Naive thymus-derived CD8-positive, alpha-beta T cell (primary cell): ENCODE measurements at regions of chr10 and their contacts with region 1.

Region 1: GRCh38 chr10:102229810-102230263 is 3.7 kb downstream of the ELOVL3 start:
- DNase-seq: peak; percentile 73 to 91 (median 86)
- ATAC-seq: peak; percentile 57 to 60
- H3K4me3 Mint-ChIP-seq: peak overlapping the region; percentile 74 to 91 (median 82)
- H3K27ac Mint-ChIP-seq: peak overlapping the region in 1 of 10 donors; percentile 7
- H3K4me1 Mint-ChIP-seq: peaks cover 18 to 42% (median 31%) of the 10 kb centered on the region in 4 donors
- H3K27me3 Mint-ChIP-seq: peaks cover 27 to 74% (median 45%) of the 10 kb centered on the region in 5 donors

Region 2: DNA sequence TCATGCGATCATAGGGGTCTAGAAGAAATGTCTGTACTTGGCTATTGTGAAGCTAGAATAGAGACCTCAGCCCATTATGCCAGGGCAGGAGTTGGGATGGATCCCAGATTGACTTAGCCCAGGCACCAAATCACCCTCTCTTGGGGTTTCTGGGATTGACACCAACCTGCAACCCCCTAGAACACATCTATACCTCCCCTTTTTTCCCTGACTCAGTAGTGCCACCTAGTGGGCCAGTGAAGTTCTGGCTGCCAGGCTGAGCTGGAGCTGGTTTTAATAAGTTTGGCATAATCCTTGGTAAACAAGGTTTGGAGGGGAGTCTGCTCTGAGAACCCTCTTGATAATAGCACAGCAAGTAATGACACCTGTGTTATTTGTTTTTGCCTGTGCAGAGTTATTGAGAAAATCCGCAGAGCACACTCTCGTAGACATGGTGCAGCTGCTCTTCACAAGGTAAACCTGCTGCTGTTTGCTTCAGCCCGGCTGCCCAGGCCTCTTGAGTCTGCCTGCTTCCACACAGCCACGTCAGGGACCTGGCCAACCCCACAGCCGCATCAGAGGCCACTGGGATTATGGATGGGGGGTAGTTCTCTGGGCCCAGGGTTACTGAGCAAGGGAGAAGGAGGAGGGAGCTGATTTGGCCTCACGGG is 122.4 kb after region 1 on chr10:
- POLR2A ChIA-PET with region 1: interaction called, 15 read pairs
- DNase-seq: peak; percentile 51 to 83 (median 69)
- ATAC-seq: peak; percentile 77 to 88
- H3K4me3 Mint-ChIP-seq: no peak overlapping the region
- H3K27ac Mint-ChIP-seq: no peak overlapping the region
- H3K4me1 Mint-ChIP-seq: peaks cover 0 to 5% (median 0%) of the 10 kb centered on the region in 4 donors
- H3K27me3 Mint-ChIP-seq: no peaks in the 10 kb centered on the region

Region 3: GRCh38 chr10:102394079-102394800 is 164.4 kb after region 1 on chr10:
- POLR2A ChIA-PET with region 1: interaction called, 11 read pairs
- DNase-seq: peak; percentile 96 to 100 (median 99)
- ATAC-seq: peak; percentile 77 to 80
- H3K4me3 Mint-ChIP-seq: peak overlapping the region; percentile 93 to 98 (median 96)
- H3K27ac Mint-ChIP-seq: peak overlapping the region; percentile 92 to 100 (median 100)
- H3K4me1 Mint-ChIP-seq: peaks cover 13 to 46% (median 41%) of the 10 kb centered on the region in 4 donors
- H3K27me3 Mint-ChIP-seq: no peaks in the 10 kb centered on the region

Region 4: GRCh38 chr10:102399217-102400089 is 169.6 kb after region 1 on chr10:
- POLR2A ChIA-PET with region 1: interaction called, 11 read pairs
- DNase-seq: peak; percentile 77 to 91 (median 88)
- ATAC-seq: peak; percentile 57 to 61
- H3K4me3 Mint-ChIP-seq: peak overlapping the region; percentile 63 to 81 (median 74)
- H3K27ac Mint-ChIP-seq: peak overlapping the region; percentile 32 to 100 (median 91)
- H3K4me1 Mint-ChIP-seq: peaks cover 12 to 44% (median 39%) of the 10 kb centered on the region in 4 donors
- H3K27me3 Mint-ChIP-seq: no peaks in the 10 kb centered on the region